Activated T-helper 1 cell treated with anti-CD3 and anti-CD28 coated beads, Interleukin-12 subunit alpha, Interleukin-12 subunit beta, Interleukin-2, Interleukin-4 antibody, amounts not matched to agents 30 ng/mL and 10 ng/mL and 1 ng/mL, durations not matched to agents 14 hours and 24 hours and 36 hours (primary cell): ENCODE measurements at regions of chr11 and their contacts with region 1.

Region 1: GRCh38 chr11:128720522-128720985 is 26.7 kb downstream of the FLI1 start:
- DNase-seq: no peak
- H3K4me3 Mint-ChIP-seq: peak overlapping the region; percentile 75
- H3K27ac Mint-ChIP-seq: peak overlapping the region; percentile 87
- H3K4me1 Mint-ChIP-seq: peaks cover 99% of the 10 kb centered on the region
- H3K27me3 Mint-ChIP-seq: no peaks in the 10 kb centered on the region

Region 2: DNA sequence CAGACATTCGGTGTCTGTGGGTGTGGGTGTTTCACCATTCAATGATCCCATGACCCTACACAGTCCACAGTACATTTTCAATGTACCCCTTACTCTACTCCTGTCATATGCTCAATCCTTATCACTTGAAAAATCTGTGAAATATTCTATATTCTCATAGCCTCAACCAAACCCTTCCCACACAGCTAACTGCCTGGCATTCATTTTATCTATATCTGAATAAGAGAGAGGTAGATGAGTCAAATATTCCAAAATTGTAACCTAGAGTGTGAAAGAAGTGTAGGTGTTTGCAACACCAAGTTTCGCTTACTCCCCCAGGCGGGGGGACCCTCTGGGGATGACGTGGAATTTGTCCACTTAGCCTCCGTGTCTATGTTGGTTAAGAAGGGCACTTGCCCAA is 488.0 kb before region 1 on chr11:
- intact Hi-C with region 1: loop called (anchors 5 kb)
- DNase-seq: no peak
- H3K4me3 Mint-ChIP-seq: peak overlapping the region; percentile 58
- H3K27ac Mint-ChIP-seq: peak overlapping the region; percentile 85
- H3K4me1 Mint-ChIP-seq: peaks cover 58% of the 10 kb centered on the region
- H3K27me3 Mint-ChIP-seq: peaks cover 2% of the 10 kb centered on the region

Region 3: GRCh38 chr11:128733440-128734102 is 13.0 kb after region 1 on chr11:
- intact Hi-C with region 1: loop called (anchors 1 kb)
- DNase-seq: no peak
- H3K4me3 Mint-ChIP-seq: peak overlapping the region; percentile 65
- H3K27ac Mint-ChIP-seq: peak overlapping the region; percentile 71
- H3K4me1 Mint-ChIP-seq: peaks cover 97% of the 10 kb centered on the region
- H3K27me3 Mint-ChIP-seq: no peaks in the 10 kb centered on the region

Region 4: DNA sequence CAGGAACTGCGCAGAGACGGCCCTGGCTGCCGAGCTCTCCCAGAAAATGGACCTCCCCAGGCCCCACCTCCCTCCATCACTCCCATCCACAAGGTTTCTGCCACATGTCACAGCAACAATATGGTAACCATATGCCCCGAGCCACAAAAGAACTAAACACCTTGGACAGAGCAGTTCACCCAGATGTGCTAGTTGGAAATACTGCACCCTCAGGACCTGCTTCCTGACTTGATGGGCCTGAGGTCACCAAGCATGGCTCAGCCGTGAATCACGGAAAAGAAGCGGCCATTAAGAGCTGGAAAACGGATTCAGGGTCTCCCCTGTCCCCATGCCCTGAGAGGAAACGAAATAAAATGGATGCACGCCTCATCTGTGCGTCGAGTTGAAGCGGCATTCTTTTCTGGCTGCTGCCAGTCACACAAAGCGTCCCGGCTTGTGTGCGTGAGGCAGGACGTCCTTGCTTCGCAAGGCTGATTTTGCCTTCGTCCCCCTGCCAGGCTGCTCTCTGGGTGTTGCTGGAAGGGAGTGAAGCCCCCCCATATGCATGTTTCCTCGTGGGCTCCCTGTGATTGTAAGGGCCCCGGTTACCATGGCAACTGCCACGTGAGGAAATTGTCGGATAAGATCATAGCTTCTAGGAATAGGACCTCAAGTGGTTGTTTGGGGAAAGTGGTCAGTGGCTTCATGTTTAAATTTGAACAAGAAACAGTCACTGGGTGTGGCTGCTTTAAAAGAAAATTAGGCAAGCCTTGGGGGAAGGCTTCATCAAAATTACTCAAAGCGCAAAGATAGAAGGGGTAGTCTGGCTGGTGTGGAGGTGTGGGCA is 25.0 kb after region 1 on chr11:
- intact Hi-C with region 1: no loop called
- DNase-seq: no peak
- H3K4me3 Mint-ChIP-seq: no peak overlapping the region
- H3K27ac Mint-ChIP-seq: no peak overlapping the region
- H3K4me1 Mint-ChIP-seq: peaks cover 68% of the 10 kb centered on the region
- H3K27me3 Mint-ChIP-seq: no peaks in the 10 kb centered on the region

Region 5: DNA sequence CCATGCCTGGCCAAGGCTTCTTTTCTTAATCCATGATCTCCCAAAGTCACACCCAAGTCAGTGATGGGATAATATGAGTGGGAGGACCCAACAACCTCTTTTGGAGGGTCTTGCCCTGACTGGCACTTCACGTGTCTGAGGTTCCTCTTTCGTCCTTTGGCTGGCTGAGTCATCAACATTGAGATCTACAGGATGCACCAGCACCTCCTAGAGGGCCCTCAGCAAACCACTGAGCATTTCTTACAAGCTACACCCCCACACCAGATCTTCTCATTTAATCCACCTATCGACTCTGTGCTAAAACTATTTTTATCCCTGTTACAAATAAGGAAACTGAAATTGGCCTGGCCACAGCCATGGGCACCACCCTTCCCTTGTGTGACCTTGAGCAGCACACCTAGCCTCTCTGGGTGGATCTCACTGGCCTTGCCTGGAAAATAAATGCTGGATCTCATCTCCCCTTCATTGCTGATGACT is 36.7 kb after region 1 on chr11:
- intact Hi-C with region 1: loop called (anchors 1 kb)
- DNase-seq: peak; percentile 55
- H3K4me3 Mint-ChIP-seq: peak overlapping the region; percentile 63
- H3K27ac Mint-ChIP-seq: peak overlapping the region; percentile 95
- H3K4me1 Mint-ChIP-seq: peaks cover 68% of the 10 kb centered on the region
- H3K27me3 Mint-ChIP-seq: no peaks in the 10 kb centered on the region